HCT116 (cell line): ENCODE measurements at regions of chr19 and their contacts with region 1.

Region 1: GRCh38 chr19:1551068-1552040 is 16.8 kb downstream of the MEX3D start:
- DNase-seq: no peak
- ATAC-seq: no peak
- H3K4me3 ChIP-seq: no peak overlapping the region
- H3K27ac ChIP-seq: no peak overlapping the region
- H3K4me1 ChIP-seq: peaks cover 8 to 15% of the 10 kb centered on the region in 2 experiments
- H3K27me3 ChIP-seq: no peaks in the 10 kb centered on the region
- CTCF ChIP-seq: no peak
- POLR2A ChIP-seq: no peak
- RAD21 ChIP-seq: no peak

Region 2: DNA sequence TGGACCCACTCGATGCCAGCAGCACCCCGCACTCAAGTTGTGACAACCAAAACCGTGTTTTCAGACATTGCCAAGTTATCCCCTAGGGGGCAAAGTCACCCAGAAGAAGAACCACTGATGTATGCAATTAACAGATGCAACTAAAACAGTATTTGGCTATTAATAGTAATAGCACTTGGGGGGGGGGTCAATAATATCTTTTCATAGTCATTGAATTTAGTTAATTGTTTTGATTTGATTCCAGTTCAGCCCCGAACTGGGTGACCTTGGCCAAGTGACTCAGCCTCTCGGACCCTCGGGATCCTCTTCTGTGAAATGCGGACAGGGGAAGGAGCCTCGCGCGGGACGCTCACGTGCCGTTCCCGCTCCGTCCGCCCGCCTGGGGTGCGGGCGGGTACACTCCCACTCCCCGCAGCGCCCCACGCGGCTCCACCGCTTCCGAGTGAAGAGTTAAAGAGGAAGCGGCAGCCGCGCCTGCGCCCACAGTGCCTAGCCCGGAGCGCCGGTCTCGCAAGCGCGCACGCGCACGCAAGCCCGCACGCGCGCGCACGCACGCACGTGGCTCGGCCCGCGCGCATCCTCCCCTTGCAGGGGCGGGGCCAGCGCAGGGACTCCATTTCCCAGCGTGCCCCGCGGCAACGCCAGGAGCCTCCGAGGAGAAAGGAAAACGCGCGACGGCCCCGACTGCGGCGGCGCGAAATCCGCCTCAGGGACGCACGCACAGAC is 144.4 kb before region 1 on chr19:
- CTCF ChIA-PET with region 1: no interaction called
- POLR2A ChIA-PET with region 1: no interaction called
- RAD21 ChIA-PET with region 1: no interaction called
- intact Hi-C with region 1: no loop called
- DNase-seq: peak; percentile 96
- ATAC-seq: peak; percentile 84
- H3K4me3 ChIP-seq: peak overlapping the region; percentile 54 to 61
- H3K27ac ChIP-seq: peak overlapping the region; percentile 98
- H3K4me1 ChIP-seq: peaks cover 26 to 54% of the 10 kb centered on the region in 2 experiments
- H3K27me3 ChIP-seq: no peaks in the 10 kb centered on the region
- CTCF ChIP-seq: peak in 2 of 3 experiments; percentile 55 to 66; a peak in 5 of 6 replicates
- POLR2A ChIP-seq: peak; percentile 75
- RAD21 ChIP-seq: no peak

Region 3: GRCh38 chr19:1461862-1462261 is 89.5 kb before region 1 on chr19:
- CTCF ChIA-PET with region 1: no interaction called
- POLR2A ChIA-PET with region 1: no interaction called
- RAD21 ChIA-PET with region 1: no interaction called
- intact Hi-C with region 1: no loop called
- DNase-seq: no peak
- ATAC-seq: no peak
- H3K4me3 ChIP-seq: no peak overlapping the region
- H3K27ac ChIP-seq: no peak overlapping the region
- H3K4me1 ChIP-seq: peaks cover 0 to 15% of the 10 kb centered on the region in 2 experiments; a peak in 2 of 4 replicates
- H3K27me3 ChIP-seq: no peaks in the 10 kb centered on the region
- CTCF ChIP-seq: no peak
- POLR2A ChIP-seq: no peak
- RAD21 ChIP-seq: no peak

Region 4: DNA sequence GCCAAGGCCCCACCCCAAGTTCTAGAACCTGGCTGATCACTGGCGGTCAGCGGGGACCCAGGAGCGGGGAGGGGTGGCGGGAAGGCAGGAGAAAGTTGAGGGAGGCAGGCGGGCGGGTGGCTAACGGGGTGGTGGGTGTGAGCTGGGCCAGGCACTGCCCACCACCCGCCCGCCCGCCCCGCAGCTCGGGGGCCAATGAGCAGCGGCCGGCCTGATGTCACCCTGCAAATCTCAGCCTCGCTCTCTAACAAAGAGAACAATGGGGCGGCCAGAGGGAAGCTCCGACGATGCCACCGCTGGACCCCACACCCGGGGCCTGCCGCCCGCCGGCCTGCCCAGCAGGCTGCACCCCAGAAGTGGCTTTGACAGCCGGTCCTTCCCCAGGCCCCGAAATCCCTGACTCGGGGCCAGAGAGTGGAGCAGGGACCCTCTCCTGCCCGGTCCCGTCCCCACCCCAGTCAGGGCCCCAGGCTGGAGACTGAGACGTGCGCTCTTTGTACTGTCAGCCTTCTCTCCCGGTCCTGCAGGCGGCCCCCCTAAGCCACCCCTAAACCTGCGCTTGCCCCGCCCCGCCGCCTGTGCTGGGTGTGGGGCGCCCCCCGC is 15.3 kb after region 1 on chr19:
- CTCF ChIA-PET with region 1: interaction called, 14 read pairs
- POLR2A ChIA-PET with region 1: interaction called, 3 read pairs
- RAD21 ChIA-PET with region 1: no interaction called
- intact Hi-C with region 1: no loop called
- DNase-seq: no peak
- ATAC-seq: peak; percentile 78
- H3K4me3 ChIP-seq: peak overlapping the region; percentile 65 to 72
- H3K27ac ChIP-seq: peak overlapping the region; percentile 88
- H3K4me1 ChIP-seq: peaks cover 13 to 14% of the 10 kb centered on the region in 2 experiments; a peak in 3 of 4 replicates
- H3K27me3 ChIP-seq: no peaks in the 10 kb centered on the region
- CTCF ChIP-seq: no peak
- POLR2A ChIP-seq: no peak
- RAD21 ChIP-seq: no peak

Region 5: DNA sequence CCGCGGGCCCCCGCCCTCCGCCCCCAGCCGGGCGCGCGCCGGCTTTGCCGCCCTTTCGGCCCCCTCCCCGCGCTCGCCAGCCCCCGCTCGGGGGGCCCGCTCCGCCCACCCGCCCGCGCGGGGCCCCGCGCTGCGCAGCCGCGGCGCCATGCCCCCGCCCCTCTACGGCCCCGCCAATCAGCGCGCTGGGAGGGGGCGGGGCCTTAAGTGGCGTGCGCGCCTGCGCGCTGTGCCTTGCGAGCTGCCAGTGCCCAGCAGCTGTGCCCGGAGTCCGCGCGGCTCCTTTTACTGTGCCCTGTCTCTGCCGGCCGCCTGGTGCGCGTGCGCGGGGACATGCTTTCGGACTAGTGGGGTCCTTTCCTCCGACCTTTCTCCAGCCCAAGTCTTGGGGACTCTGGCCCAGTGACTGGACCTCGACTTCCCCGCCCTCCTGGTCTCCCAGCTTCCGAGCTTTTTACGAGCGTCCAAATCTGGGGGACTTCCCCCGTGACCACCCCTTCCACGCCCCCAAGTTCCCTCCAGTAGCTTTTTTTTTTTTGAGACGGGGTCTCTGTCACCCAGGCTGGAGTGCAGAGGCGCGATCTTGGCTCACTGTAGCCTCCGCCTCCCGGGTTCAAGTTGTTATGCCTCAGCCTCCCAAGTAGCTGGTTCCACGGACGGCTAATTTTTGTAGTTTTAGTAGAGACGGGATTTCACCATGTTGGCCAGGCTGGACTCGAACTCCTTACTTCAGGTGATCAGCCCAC is 41.6 kb after region 1 on chr19 and contains the start of gene MBD3:
- CTCF ChIA-PET with region 1: interaction called, 7 read pairs
- POLR2A ChIA-PET with region 1: no interaction called
- RAD21 ChIA-PET with region 1: interaction called in 1 of 2 experiments, 10 read pairs
- intact Hi-C with region 1: no loop called
- DNase-seq: peak; percentile 84
- ATAC-seq: peak; percentile 84
- H3K4me3 ChIP-seq: peak within 1 kb of the TSS; percentile 87 to 96
- H3K27ac ChIP-seq: peak within 1 kb of the TSS; percentile 100
- H3K4me1 ChIP-seq: peaks cover 19 to 43% of the 10 kb centered on the region in 2 experiments
- H3K27me3 ChIP-seq: no peaks in the 10 kb centered on the region
- CTCF ChIP-seq: no peak
- POLR2A ChIP-seq: peak; percentile 68
- RAD21 ChIP-seq: no peak
- total RNA-seq, gene MBD3: 85.7 TPM

Region 6: DNA sequence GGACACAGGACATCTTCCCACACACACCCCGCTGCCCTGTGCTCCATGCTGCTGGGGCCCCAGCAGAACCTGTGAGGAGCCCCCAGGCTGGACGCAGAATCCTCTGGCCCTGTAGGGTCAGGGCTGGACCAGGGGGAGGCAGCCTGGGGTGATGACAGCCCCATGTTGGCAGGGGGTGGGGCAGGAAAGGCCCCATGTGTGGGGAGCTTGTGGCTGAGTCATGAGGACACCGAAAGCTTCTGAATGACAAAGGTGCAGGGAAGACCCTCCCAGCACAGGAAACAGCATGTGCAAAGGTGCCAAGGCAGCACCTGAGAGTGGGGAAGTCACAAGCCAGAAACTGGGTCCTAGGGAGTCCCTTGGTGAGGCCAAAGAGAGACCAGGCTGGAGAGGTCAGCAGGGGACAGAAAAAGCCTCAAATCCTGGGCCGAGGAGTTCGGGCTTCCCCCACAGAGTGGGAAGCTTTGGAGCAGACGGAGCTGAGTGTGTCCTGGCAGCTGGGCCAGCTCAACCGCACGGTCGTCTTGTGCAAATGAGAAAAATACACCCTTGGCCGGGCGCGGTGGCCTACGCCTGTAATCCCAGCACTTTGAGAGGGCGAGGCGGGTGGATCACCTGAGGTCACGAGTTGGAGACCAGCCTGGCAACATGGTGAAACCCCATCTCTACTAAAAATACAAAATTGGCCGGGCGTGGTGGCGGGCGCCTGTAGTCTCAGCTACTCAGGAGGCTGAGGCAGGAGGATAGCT is 243.2 kb after region 1 on chr19:
- CTCF ChIA-PET with region 1: interaction called, 5 read pairs
- POLR2A ChIA-PET with region 1: interaction called, 3 read pairs
- RAD21 ChIA-PET with region 1: no interaction called
- intact Hi-C with region 1: loop called (anchors 2 kb)
- DNase-seq: no peak
- ATAC-seq: no peak
- H3K4me3 ChIP-seq: no peak overlapping the region
- H3K27ac ChIP-seq: no peak overlapping the region; the same call in 1 of the 2 replicates
- H3K4me1 ChIP-seq: peaks cover 5 to 29% of the 10 kb centered on the region in 2 experiments
- H3K27me3 ChIP-seq: no peaks in the 10 kb centered on the region
- CTCF ChIP-seq: no peak
- POLR2A ChIP-seq: no peak
- RAD21 ChIP-seq: no peak

Region 7: DNA sequence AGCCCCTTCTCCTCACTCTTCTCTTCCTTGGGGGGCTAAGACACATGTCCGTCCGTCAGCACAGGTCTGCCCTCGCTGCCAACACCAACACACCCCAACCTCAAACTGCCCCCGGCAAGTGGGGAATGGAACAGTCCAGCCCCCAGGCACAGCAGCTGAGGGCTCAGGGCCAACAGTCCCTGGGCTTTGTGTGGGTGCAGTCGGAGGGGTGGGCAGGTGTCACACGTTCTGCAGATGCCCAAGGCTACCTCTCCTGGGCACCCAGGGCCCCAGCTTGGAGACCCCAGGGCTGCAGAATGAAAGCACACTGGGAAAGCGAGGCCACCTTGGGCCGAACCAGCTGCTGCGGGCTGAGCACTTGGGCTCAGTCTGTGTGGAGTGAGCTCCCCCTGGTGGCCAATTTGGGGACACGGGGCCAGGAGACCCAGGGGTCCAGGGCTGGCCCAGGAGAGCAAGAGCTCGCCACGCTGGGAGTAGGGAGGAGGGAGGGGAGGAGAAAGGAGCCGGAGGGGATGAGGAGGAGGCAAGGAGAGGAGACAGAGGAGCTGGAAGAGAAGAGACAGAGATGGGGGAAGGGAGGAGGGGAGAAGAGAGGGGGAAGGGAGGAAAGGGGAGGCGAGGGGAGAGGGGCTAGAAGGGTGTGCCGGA is 274.7 kb after region 1 on chr19:
- CTCF ChIA-PET with region 1: interaction called, 11 read pairs
- POLR2A ChIA-PET with region 1: no interaction called
- RAD21 ChIA-PET with region 1: interaction called in 1 of 2 experiments, 3 read pairs
- intact Hi-C with region 1: no loop called
- DNase-seq: no peak
- ATAC-seq: peak; percentile 89
- H3K4me3 ChIP-seq: no peak overlapping the region
- H3K27ac ChIP-seq: no peak overlapping the region; the same call in 1 of the 2 replicates
- H3K4me1 ChIP-seq: peaks cover 4 to 7% of the 10 kb centered on the region in 2 experiments; a peak in 3 of 4 replicates
- H3K27me3 ChIP-seq: no peaks in the 10 kb centered on the region
- CTCF ChIP-seq: peak; percentile 66 to 96 (median 92); a peak in 5 of 6 replicates
- POLR2A ChIP-seq: no peak
- RAD21 ChIP-seq: peak; percentile 79